ENCODE measurements at regions of chr3 and their contacts with region 1.

Region 1: GRCh38 chr3:56303487-56303886 is 164.8 kb downstream of the ERC2 start:
- DNase-seq: peak; percentile 23
- H3K4me3 Mint-ChIP-seq: no peak overlapping the region
- H3K27ac Mint-ChIP-seq: no peak overlapping the region
- H3K4me1 Mint-ChIP-seq: no peaks in the 10 kb centered on the region
- H3K27me3 Mint-ChIP-seq: peaks cover 8% of the 10 kb centered on the region

Region 2: DNA sequence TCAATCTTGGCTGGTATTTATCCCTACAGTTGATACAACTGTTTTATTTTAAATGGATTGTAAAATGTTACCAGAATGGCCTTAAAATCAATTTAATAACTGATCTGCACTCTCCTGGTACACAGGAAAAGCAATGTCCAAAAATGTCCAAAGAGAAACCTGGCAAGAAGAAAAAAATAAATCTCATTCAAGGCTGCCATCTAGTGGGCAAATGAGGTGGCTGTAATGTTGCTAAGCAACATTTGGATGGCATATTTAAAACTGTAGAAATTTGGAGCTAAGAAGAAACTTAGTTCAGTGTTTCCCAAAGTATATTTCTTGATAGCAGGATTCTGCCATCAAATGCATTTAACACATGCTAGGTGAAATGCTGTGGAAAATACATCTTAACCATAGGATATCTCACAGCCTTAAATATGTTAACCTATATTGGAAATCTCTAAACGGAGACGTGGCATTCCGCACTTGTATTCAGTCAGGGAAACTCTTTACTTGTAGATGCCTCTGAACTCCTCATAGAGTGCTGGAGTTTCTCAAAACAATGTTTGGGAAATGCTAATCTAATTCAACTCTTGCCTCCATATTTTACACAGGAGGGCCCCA is 52.0 kb before region 1 on chr3:
- CTCF ChIA-PET with region 1: interaction called, 11 read pairs
- DNase-seq: peak; percentile 22
- H3K4me3 Mint-ChIP-seq: no peak overlapping the region
- H3K27ac Mint-ChIP-seq: no peak overlapping the region
- H3K4me1 Mint-ChIP-seq: no peaks in the 10 kb centered on the region
- H3K27me3 Mint-ChIP-seq: no peaks in the 10 kb centered on the region

Region 3: GRCh38 chr3:56291244-56291680 is 12.2 kb before region 1 on chr3:
- CTCF ChIA-PET with region 1: interaction called, 22 read pairs
- DNase-seq: no peak
- H3K4me3 Mint-ChIP-seq: no peak overlapping the region
- H3K27ac Mint-ChIP-seq: peak overlapping the region; percentile 21
- H3K4me1 Mint-ChIP-seq: peaks cover 5% of the 10 kb centered on the region
- H3K27me3 Mint-ChIP-seq: peaks cover 10% of the 10 kb centered on the region